ENCODE measurements at regions of chr19 and their contacts with region 1.

Region 1: GRCh38 chr19:6424939-6425731 is 524 bp upstream of the KHSRP start:
- DNase-seq: peak; percentile 100
- ATAC-seq: peak; percentile 82
- H3K4me3 ChIP-seq: peak overlapping the region in 4 of 5 experiments; percentile 31 to 57 (median 45)
- H3K4me3 Mint-ChIP-seq: peak overlapping the region; percentile 82
- H3K27ac ChIP-seq: peak overlapping the region; percentile 84 to 93
- H3K27ac Mint-ChIP-seq: peak overlapping the region; percentile 94
- H3K4me1 ChIP-seq: peaks cover 26 to 35% of the 10 kb centered on the region in 2 donors
- H3K4me1 Mint-ChIP-seq: peaks cover 35% of the 10 kb centered on the region
- H3K27me3 ChIP-seq: no peaks in the 10 kb centered on the region
- H3K27me3 Mint-ChIP-seq: no peaks in the 10 kb centered on the region
- CTCF ChIP-seq: no peak

Region 2: DNA sequence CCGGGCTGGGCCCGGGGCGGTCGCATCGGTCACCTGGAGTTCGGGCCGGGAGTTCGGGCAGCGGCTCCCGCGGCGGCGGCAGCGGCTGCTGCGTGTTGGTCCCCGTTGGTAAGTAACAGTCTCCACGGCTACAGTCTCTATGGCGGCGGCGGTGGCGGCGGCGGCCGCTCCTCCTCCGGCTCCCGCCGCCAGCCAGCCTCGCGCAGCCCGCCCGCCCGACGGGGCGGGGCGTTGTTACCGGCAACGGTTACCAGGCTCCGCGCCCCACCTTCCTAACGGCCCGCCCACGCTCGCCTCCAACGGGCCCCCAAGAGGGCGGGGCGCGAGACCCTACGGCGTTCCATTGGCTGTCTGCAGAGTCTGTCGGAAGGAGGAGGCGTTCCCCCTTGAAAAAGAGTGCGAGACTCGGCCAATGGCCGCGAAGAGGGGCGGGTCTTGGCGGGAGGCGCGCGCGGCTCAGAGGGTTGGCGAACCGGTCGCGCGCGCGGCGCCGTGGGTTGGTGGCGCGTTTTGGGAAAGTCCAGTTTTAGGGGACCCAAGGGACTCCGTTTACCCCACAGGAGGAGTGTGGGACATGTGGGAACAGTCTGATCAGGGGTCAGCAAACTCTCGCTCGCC is 314.7 kb before region 1 on chr19 and contains the start of gene RFX2:
- CTCF ChIA-PET with region 1: no interaction called
- POLR2A ChIA-PET with region 1: no interaction called
- intact Hi-C with region 1: loop called (anchors 2 kb)
- DNase-seq: peak; percentile 99
- ATAC-seq: peak; percentile 98
- H3K4me3 ChIP-seq: peak within 1 kb of the TSS; percentile 51 to 74 (median 54)
- H3K4me3 Mint-ChIP-seq: peak within 1 kb of the TSS; percentile 88
- H3K27ac ChIP-seq: peak within 1 kb of the TSS; percentile 30 to 38
- H3K27ac Mint-ChIP-seq: peak within 1 kb of the TSS; percentile 81
- H3K4me1 ChIP-seq: peaks cover 21 to 23% of the 10 kb centered on the region in 2 donors
- H3K4me1 Mint-ChIP-seq: peaks cover 21% of the 10 kb centered on the region
- H3K27me3 ChIP-seq: peaks cover 0 to 34% (median 12%) of the 10 kb centered on the region in 4 experiments
- H3K27me3 Mint-ChIP-seq: peaks cover 21% of the 10 kb centered on the region
- CTCF ChIP-seq: no peak
- total RNA-seq, gene RFX2: 6.5 and 8.6 TPM in 2 replicates

Region 3: GRCh38 chr19:6141217-6141616 is 283.9 kb before region 1 on chr19:
- CTCF ChIA-PET with region 1: no interaction called
- POLR2A ChIA-PET with region 1: no interaction called
- intact Hi-C with region 1: no loop called
- DNase-seq: no peak
- ATAC-seq: no peak
- H3K4me3 ChIP-seq: no peak overlapping the region
- H3K4me3 Mint-ChIP-seq: no peak overlapping the region
- H3K27ac ChIP-seq: no peak overlapping the region
- H3K27ac Mint-ChIP-seq: no peak overlapping the region
- H3K4me1 ChIP-seq: peaks cover 0 to 4% of the 10 kb centered on the region in 2 donors
- H3K4me1 Mint-ChIP-seq: peaks cover 5% of the 10 kb centered on the region
- H3K27me3 ChIP-seq: no peaks in the 10 kb centered on the region
- H3K27me3 Mint-ChIP-seq: peaks cover 3% of the 10 kb centered on the region
- CTCF ChIP-seq: no peak

Region 4: GRCh38 chr19:6279931-6280591 is 145.1 kb before region 1 on chr19 and contains the start of gene MLLT1:
- CTCF ChIA-PET with region 1: no interaction called
- POLR2A ChIA-PET with region 1: interaction called, 6 read pairs
- intact Hi-C with region 1: loop called (anchors 1 kb)
- DNase-seq: peak; percentile 97
- ATAC-seq: peak; percentile 97
- H3K4me3 ChIP-seq: peak within 1 kb of the TSS; percentile 44 to 85 (median 62)
- H3K4me3 Mint-ChIP-seq: peak within 1 kb of the TSS; percentile 89
- H3K27ac ChIP-seq: peak within 1 kb of the TSS; percentile 29 to 77
- H3K27ac Mint-ChIP-seq: peak within 1 kb of the TSS; percentile 64
- H3K4me1 ChIP-seq: peaks cover 15 to 23% of the 10 kb centered on the region in 2 donors
- H3K4me1 Mint-ChIP-seq: peaks cover 27% of the 10 kb centered on the region
- H3K27me3 ChIP-seq: no peaks in the 10 kb centered on the region
- H3K27me3 Mint-ChIP-seq: no peaks in the 10 kb centered on the region
- CTCF ChIP-seq: peak; percentile 90
- total RNA-seq, gene MLLT1: 40.2 and 45.7 TPM in 2 replicates

Region 5: GRCh38 chr19:6372594-6373095 is 52.5 kb before region 1 on chr19 and contains the start of gene ALKBH7:
- CTCF ChIA-PET with region 1: no interaction called
- POLR2A ChIA-PET with region 1: interaction called, 12 read pairs
- intact Hi-C with region 1: no loop called
- DNase-seq: peak; percentile 99
- ATAC-seq: peak; percentile 73
- H3K4me3 ChIP-seq: peak within 1 kb of the TSS; percentile 45 to 96 (median 93)
- H3K4me3 Mint-ChIP-seq: peak within 1 kb of the TSS; percentile 91
- H3K27ac ChIP-seq: peak within 1 kb of the TSS; percentile 88 to 98
- H3K27ac Mint-ChIP-seq: peak within 1 kb of the TSS; percentile 91
- H3K4me1 ChIP-seq: peaks cover 9 to 12% of the 10 kb centered on the region in 2 donors
- H3K4me1 Mint-ChIP-seq: peaks cover 11% of the 10 kb centered on the region
- H3K27me3 ChIP-seq: no peaks in the 10 kb centered on the region
- H3K27me3 Mint-ChIP-seq: no peaks in the 10 kb centered on the region
- CTCF ChIP-seq: no peak
- total RNA-seq, gene ALKBH7: 62.7 and 67.0 TPM in 2 replicates

Region 6: DNA sequence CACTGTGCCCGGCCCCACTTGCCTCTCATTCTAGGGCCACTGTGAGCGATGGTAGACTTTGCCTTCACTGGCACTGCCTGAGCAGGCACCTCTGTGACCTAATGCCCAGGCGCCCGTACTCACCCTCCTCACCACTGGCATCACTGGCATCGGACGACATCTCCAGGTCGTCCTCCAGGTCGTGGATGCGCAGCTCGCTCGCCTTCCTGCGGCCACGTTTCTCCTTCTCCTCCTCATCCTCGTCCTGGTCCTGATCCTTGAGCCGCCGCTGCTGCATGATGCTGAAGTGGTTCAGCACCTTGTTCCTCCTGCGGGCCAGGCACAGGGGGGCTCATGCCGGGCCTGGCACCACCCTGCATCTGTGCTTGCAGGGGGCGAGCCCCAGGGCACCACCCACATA is 41.9 kb before region 1 on chr19:
- CTCF ChIA-PET with region 1: no interaction called
- POLR2A ChIA-PET with region 1: no interaction called
- intact Hi-C with region 1: no loop called
- DNase-seq: no peak
- ATAC-seq: no peak
- H3K4me3 ChIP-seq: no peak overlapping the region
- H3K4me3 Mint-ChIP-seq: no peak overlapping the region
- H3K27ac ChIP-seq: no peak overlapping the region
- H3K27ac Mint-ChIP-seq: no peak overlapping the region
- H3K4me1 ChIP-seq: no peaks in the 10 kb centered on the region
- H3K4me1 Mint-ChIP-seq: no peaks in the 10 kb centered on the region
- H3K27me3 ChIP-seq: no peaks in the 10 kb centered on the region
- H3K27me3 Mint-ChIP-seq: no peaks in the 10 kb centered on the region
- CTCF ChIP-seq: no peak

Region 7: DNA sequence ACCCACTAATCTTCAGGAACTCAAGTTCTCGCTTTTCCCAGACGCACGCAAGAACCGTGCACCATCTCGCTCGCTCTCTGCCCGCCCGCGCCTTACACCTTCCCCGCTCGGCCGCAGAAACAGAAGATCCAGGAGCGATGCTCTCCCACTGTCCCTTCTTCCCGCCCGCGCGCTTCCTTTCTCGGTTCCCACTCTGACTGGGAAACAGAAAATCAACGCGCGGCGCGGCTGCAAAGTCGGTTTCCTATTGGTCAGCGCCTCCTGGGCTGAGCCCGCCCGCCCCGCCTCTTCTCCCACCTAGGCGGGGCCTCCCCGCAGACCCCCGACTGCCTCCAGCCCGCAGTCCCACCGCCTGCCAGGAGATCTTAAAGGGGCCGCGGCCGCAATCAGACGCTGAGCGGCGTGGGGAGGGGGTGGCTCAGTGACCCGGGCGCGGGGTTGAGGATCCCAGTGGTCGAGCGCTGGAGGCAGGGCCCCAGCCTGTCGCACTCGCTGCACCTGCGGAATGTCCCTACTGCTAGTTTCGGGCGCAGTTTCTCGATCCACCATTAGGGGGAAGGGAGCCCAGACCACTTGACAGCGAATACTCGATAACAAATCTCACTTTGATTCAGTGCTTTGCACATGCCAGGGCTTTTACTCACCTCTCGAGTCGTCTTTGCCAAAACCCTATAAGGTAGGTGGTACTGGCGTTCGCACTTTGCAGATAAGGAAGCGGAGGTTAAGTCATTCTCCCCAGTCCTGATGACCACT is 35.1 kb after region 1 on chr19:
- CTCF ChIA-PET with region 1: interaction called, 3 read pairs
- POLR2A ChIA-PET with region 1: interaction called, 9 read pairs
- intact Hi-C with region 1: loop called (anchors 1 kb)
- DNase-seq: peak; percentile 99
- ATAC-seq: peak; percentile 84
- H3K4me3 ChIP-seq: peak overlapping the region; percentile 60 to 93 (median 78)
- H3K4me3 Mint-ChIP-seq: peak overlapping the region; percentile 91
- H3K27ac ChIP-seq: peak overlapping the region; percentile 76 to 86
- H3K27ac Mint-ChIP-seq: peak overlapping the region; percentile 78
- H3K4me1 ChIP-seq: peaks cover 11 to 34% of the 10 kb centered on the region in 2 donors
- H3K4me1 Mint-ChIP-seq: peaks cover 32% of the 10 kb centered on the region
- H3K27me3 ChIP-seq: peaks cover 0 to 15% (median 6%) of the 10 kb centered on the region in 4 experiments
- H3K27me3 Mint-ChIP-seq: no peaks in the 10 kb centered on the region
- CTCF ChIP-seq: peak; percentile 78

Region 8: DNA sequence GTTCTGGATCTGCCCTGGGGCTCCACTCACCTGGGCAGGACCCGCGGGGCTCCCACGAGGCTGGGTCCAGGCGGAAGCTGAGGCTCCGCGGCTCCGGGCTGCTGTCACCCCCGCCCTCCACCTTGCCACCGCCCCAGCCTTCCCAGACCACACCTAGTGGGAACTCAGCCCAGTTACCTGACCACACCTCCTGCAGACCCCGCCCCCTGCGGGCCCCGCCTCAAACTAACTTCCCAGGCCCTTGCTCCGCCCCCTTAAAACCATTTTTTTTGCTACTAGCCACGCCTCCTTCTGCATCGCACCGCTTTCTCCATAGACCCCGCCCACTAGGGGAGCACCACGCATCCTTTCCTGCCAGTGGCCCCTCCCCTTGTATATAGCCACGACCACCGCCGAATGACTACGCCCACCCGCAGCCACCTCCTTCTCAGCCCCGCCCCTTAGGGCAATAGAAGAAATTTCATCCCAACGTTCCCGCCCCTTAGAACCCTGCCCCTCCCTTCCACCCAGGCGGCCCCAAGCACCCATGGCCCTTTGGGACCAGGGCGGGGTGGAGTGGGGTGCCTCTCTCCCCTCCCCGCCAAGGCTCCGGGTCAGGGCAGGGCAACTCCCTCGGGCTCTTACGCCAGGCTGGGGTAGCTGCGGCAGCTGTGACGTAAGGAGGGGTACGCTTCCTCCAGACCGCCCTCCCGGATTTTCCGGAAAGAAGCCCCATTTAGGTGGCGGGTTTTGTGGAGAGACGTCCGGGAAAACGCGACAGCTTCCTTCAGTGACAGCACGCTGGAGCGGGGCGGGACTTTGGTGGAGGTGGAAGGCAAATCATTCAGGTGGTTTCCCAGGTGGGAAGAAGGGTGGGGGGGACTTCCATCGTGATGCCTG is 342.5 kb after region 1 on chr19 and contains the start of gene SH2D3A:
- CTCF ChIA-PET with region 1: no interaction called
- POLR2A ChIA-PET with region 1: interaction called, 12 read pairs
- intact Hi-C with region 1: no loop called
- DNase-seq: peak; percentile 98
- ATAC-seq: peak; percentile 69
- H3K4me3 ChIP-seq: peak within 1 kb of the TSS; percentile 36 to 81 (median 68)
- H3K4me3 Mint-ChIP-seq: peak within 1 kb of the TSS; percentile 93
- H3K27ac ChIP-seq: peak within 1 kb of the TSS; percentile 89 to 96
- H3K27ac Mint-ChIP-seq: peak within 1 kb of the TSS; percentile 95
- H3K4me1 ChIP-seq: peaks cover 28 to 46% of the 10 kb centered on the region in 2 donors
- H3K4me1 Mint-ChIP-seq: peaks cover 47% of the 10 kb centered on the region
- H3K27me3 ChIP-seq: no peaks in the 10 kb centered on the region
- H3K27me3 Mint-ChIP-seq: no peaks in the 10 kb centered on the region
- CTCF ChIP-seq: no peak
- total RNA-seq, gene SH2D3A: 33.5 and 36.1 TPM in 2 replicates